ENCODE measurements at regions of chr17 and their contacts with region 1.

Region 1: GRCh38 chr17:58631523-58632323 is 60.1 kb downstream of the TEX14 start:
- DNase-seq: peak; percentile 98
- H3K4me3 ChIP-seq: peak overlapping the region; percentile 35
- H3K27ac ChIP-seq: peak overlapping the region; percentile 97
- H3K4me1 ChIP-seq: peaks cover 7% of the 10 kb centered on the region
- H3K27me3 ChIP-seq: no peaks in the 10 kb centered on the region
- CTCF ChIP-seq: peak; percentile 40

Region 2: GRCh38 chr17:58200017-58200633 is 431.6 kb before region 1 on chr17:
- CTCF ChIA-PET with region 1: no interaction called
- POLR2A ChIA-PET with region 1: no interaction called
- intact Hi-C with region 1: no loop called
- DNase-seq: peak; percentile 78
- H3K4me3 ChIP-seq: no peak overlapping the region
- H3K27ac ChIP-seq: no peak overlapping the region
- H3K4me1 ChIP-seq: no peaks in the 10 kb centered on the region
- H3K27me3 ChIP-seq: peaks cover 10% of the 10 kb centered on the region
- CTCF ChIP-seq: peak; percentile 78

Region 3: GRCh38 chr17:58402047-58402446 is 229.7 kb before region 1 on chr17:
- CTCF ChIA-PET with region 1: no interaction called
- POLR2A ChIA-PET with region 1: no interaction called
- intact Hi-C with region 1: no loop called
- DNase-seq: no peak
- H3K4me3 ChIP-seq: no peak overlapping the region
- H3K27ac ChIP-seq: no peak overlapping the region
- H3K4me1 ChIP-seq: no peaks in the 10 kb centered on the region
- H3K27me3 ChIP-seq: peaks cover 46% of the 10 kb centered on the region
- CTCF ChIP-seq: no peak

Region 4: DNA sequence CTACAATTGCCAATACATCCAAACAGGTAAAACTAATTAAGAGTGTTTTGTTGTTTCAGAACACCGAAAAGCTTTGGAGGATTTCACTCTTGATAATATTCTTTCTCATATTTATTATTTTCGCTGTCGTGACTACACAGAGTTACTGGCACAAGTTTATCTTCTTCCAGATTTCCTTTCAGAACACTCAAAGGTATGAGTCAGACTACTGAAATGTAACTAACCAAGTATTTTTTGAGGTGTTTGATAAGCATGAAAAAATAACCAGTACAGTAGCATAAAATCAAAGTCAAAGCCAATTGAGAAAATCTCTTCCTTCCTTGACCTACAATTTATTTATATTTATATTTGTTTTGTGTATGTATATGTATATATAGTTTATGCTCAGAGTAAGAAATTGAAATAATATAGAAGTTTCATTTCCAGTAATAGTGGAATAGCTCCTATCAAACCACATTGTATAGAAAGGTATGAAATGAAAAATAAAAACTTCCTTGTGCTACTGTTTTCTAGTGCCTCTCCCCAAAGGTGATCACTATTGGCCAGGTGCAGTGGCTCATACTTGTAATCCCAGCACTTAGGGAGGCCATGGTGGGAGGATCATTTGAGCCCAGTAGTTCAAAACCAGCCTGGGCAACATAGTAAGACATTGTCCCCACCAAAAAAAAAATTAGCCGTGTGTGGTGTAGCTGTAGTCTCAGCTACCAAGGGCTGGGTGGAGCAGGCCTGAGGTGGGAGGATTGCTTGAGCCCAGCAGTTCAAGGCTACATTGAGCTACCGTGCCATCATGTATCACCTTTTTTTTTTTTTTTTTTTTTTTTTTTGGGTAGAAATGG is 71.6 kb after region 1 on chr17:
- CTCF ChIA-PET with region 1: no interaction called
- POLR2A ChIA-PET with region 1: interaction called, 12 read pairs
- intact Hi-C with region 1: no loop called
- DNase-seq: no peak
- H3K4me3 ChIP-seq: no peak overlapping the region
- H3K27ac ChIP-seq: no peak overlapping the region
- H3K4me1 ChIP-seq: no peaks in the 10 kb centered on the region
- H3K27me3 ChIP-seq: no peaks in the 10 kb centered on the region
- CTCF ChIP-seq: no peak

Region 5: DNA sequence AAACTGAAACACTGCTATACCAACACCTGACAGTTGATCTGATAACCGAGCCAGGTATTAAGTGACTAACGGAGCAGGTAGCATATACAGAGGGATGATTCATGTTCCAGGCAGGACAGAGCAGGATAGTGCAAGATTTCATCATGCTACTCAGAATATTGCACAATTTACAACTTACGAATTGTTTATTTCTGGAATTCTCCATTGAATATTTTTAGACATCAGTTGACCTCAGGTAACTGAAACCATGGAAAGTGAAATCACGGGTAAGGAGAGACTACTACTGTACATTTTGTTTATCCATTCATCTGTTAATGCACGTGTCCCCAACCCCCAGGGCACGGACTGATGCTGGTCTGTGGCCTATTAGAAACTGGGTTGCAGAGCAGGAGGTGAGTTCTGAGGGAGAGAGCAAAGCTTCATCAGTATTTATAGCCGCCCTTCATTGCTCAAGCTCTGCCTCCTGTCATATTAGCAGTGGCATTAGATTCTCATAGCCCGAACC is 109.5 kb after region 1 on chr17:
- CTCF ChIA-PET with region 1: no interaction called
- POLR2A ChIA-PET with region 1: no interaction called
- intact Hi-C with region 1: no loop called
- DNase-seq: no peak
- H3K4me3 ChIP-seq: no peak overlapping the region
- H3K27ac ChIP-seq: no peak overlapping the region
- H3K4me1 ChIP-seq: no peaks in the 10 kb centered on the region
- H3K27me3 ChIP-seq: no peaks in the 10 kb centered on the region
- CTCF ChIP-seq: no peak

Region 6: GRCh38 chr17:58755577-58756245 is 124.0 kb after region 1 on chr17 and contains the start of gene PPM1E:
- CTCF ChIA-PET with region 1: no interaction called
- POLR2A ChIA-PET with region 1: interaction called, 15 read pairs
- intact Hi-C with region 1: no loop called
- DNase-seq: peak; percentile 87
- H3K4me3 ChIP-seq: peak within 1 kb of the TSS; percentile 90
- H3K27ac ChIP-seq: no peak within 1 kb of the TSS
- H3K4me1 ChIP-seq: peaks cover 3% of the 10 kb centered on the region
- H3K27me3 ChIP-seq: no peaks in the 10 kb centered on the region
- CTCF ChIP-seq: no peak
- total RNA-seq, gene PPM1E: 6.0 and 8.4 TPM in 2 replicates

Measured in A673 (cell line).